ENCODE measurements at regions of chr6 and their contacts with region 1.

Region 1: DNA sequence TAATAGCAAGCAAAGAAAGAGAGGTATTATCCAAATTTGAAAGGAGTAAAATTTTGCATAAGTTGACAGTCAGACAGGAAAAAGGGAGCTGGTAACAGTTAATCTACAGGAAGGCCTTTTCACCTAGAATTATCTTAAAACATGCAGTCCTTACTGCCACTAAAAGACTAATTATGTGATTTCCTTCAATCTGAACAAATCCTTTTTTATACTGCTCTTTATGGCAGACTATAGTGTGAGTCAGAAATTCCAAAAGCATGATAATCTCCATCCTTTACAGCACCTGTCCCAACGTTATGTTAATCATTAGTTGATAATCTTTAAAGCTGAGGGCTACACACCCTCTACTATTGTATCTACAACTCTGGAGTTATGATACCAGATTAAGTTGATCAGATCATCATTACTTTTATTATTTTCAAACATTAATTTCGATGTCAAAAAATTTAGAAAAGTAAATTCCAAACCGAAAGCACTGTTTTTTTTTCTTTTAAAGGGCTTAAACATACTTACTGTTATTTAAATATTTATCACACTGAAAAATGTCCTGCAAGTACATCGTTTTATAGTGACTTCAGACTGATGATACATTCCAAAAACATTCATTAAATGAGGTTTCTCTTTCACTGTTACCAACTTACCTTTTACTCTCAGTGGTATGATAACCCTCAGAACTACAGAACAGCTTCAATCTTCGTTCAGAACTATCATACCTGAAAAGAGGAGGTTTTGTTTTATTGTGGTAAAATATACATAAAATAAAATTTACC is 33.2 kb upstream of the AKAP7 start:
- DNase-seq: peak in 1 of 2 experiments; percentile 43
- H3K4me3 ChIP-seq: no peak overlapping the region
- H3K27ac ChIP-seq: no peak overlapping the region
- H3K4me1 ChIP-seq: peaks cover 18% of the 10 kb centered on the region
- H3K27me3 ChIP-seq: no peaks in the 10 kb centered on the region
- CTCF ChIP-seq: no peak

Region 2: DNA sequence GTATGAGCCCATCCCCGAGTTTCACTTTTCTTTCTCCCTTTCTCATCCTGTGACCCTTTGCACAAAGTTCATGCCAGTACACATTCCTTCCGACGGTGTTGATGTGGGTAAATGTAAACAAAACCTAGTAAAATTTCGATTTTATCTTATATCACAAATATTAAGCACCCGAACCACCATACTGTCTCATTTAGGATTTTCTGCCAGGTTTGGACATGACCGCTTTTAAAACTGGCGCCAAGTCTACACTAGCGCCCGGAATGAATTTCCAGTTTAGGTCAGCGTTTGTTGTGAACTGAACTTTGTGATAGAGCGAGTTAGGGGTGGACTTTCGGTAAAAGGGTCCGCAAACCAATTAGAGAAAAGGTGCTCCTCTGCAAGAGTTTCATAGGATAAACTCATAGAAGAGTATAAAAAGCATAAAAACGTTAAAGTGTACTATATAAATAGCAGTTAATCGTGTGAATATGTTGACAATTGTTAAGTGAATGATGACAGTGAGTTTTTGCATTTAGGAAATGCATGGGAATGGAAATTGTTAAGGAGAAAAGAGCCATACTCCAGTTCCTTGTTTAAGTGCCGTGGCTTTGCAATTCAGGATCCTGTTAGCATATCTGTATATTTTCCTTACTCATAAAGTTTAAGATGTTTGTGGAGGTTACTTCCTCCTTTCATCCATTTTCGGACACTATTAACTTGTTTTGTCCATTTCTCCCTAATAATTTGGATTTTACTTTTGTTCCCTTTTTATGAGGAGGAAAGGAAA is 34.1 kb after region 1 on chr6:
- CTCF ChIA-PET with region 1: no interaction called
- POLR2A ChIA-PET with region 1: no interaction called
- intact Hi-C with region 1: no loop called
- DNase-seq: no peak
- H3K4me3 ChIP-seq: peak overlapping the region; percentile 65
- H3K27ac ChIP-seq: no peak overlapping the region
- H3K4me1 ChIP-seq: peaks cover 7% of the 10 kb centered on the region; the same call in 1 of the 2 replicates
- H3K27me3 ChIP-seq: no peaks in the 10 kb centered on the region; the same call in 1 of the 2 replicates
- CTCF ChIP-seq: no peak

Region 3: GRCh38 chr6:131175564-131175963 is 73.5 kb after region 1 on chr6:
- CTCF ChIA-PET with region 1: no interaction called
- POLR2A ChIA-PET with region 1: interaction called, 19 read pairs
- intact Hi-C with region 1: no loop called
- DNase-seq: no peak
- H3K4me3 ChIP-seq: no peak overlapping the region
- H3K27ac ChIP-seq: no peak overlapping the region
- H3K4me1 ChIP-seq: no peaks in the 10 kb centered on the region
- H3K27me3 ChIP-seq: no peaks in the 10 kb centered on the region
- CTCF ChIP-seq: no peak

Measured in PC-9 (cell line).